Psoas muscle (tissue), 8 donors: ENCODE measurements at regions of chr21 and their contacts with region 1.

Region 1: GRCh38 chr21:45123440-45123839 is 49.1 kb downstream of the ADARB1 start:
- DNase-seq: no peak
- ATAC-seq: no peak
- H3K4me3 ChIP-seq: no peak overlapping the region
- H3K27ac ChIP-seq: no peak overlapping the region
- H3K4me1 ChIP-seq: peaks cover 16% of the 10 kb centered on the region
- H3K27me3 ChIP-seq: no peaks in the 10 kb centered on the region
- CTCF ChIP-seq: no peak

Region 2: GRCh38 chr21:44880762-44881585 is 242.5 kb before region 1 on chr21:
- intact Hi-C with region 1: no loop called
- DNase-seq: peak in 1 of 2 donors; percentile 47
- ATAC-seq: peak in 1 of 4 donors; percentile 11
- H3K4me3 ChIP-seq: no peak overlapping the region
- H3K27ac ChIP-seq: peak overlapping the region; percentile 36
- H3K4me1 ChIP-seq: no peaks in the 10 kb centered on the region
- H3K27me3 ChIP-seq: no peaks in the 10 kb centered on the region
- CTCF ChIP-seq: no peak

Region 3: GRCh38 chr21:44927587-44928461 is 195.6 kb before region 1 on chr21:
- intact Hi-C with region 1: no loop called
- DNase-seq: peak; percentile 44 to 61
- ATAC-seq: peak in 3 of 4 donors; percentile 7 to 35 (median 24)
- H3K4me3 ChIP-seq: peak overlapping the region; percentile 1
- H3K27ac ChIP-seq: no peak overlapping the region
- H3K4me1 ChIP-seq: peaks cover 13% of the 10 kb centered on the region
- H3K27me3 ChIP-seq: peaks cover 0 to 64% (median 20%) of the 10 kb centered on the region in 3 donors
- CTCF ChIP-seq: no peak

Region 4: DNA sequence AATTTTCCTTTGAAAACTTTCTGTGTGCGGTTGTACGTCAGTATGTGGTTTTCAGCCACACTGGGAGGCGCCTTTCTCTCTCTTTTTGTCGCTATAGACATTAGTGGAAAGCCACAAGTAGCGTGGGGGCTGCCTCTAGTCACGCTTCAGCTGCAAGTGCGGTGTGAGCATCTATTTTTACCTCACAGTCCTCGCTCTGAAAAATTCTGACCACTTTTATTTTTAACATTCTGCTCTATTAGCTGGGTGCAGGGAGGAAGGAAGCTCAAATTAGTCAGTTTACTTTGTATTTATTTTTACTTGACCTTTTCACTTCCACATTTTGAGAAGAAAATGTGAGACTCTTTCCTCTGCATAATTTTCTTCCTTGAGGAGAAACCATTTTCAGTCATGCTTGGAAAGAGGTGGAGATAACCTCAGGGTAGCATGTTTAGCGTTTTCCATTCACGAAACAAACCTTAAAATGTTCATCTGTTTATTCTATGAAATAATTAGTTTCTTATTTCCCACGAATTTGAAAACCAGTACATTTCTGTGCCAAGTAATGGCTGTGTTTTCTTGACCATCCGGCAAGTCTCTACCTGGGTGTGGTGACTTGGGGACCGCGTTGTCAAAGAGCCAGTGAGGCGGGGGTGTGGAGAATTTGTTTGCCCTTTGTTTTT is 13.5 kb before region 1 on chr21:
- intact Hi-C with region 1: loop called in 1 of 2 experiments (anchors 2 kb)
- DNase-seq: no peak
- ATAC-seq: peak in 1 of 4 donors; percentile 39
- H3K4me3 ChIP-seq: peak overlapping the region; percentile 39
- H3K27ac ChIP-seq: no peak overlapping the region
- H3K4me1 ChIP-seq: peaks cover 45% of the 10 kb centered on the region
- H3K27me3 ChIP-seq: no peaks in the 10 kb centered on the region
- CTCF ChIP-seq: no peak

Region 5: GRCh38 chr21:45167796-45168222 is 44.4 kb after region 1 on chr21:
- intact Hi-C with region 1: no loop called
- DNase-seq: no peak
- ATAC-seq: peak in 2 of 4 donors; percentile 39 to 52
- H3K4me3 ChIP-seq: peak overlapping the region; percentile 15
- H3K27ac ChIP-seq: peak overlapping the region; percentile 67
- H3K4me1 ChIP-seq: peaks cover 44% of the 10 kb centered on the region
- H3K27me3 ChIP-seq: no peaks in the 10 kb centered on the region
- CTCF ChIP-seq: no peak